GM23248 (cell line): ENCODE measurements at regions of chr17 and their contacts with region 1.

Region 1: GRCh38 chr17:5468075-5468473 is 708 bp downstream of the DHX33 start:
- DNase-seq: no peak
- H3K4me3 ChIP-seq: peak overlapping the region; percentile 99
- H3K27ac ChIP-seq: peak overlapping the region; percentile 55
- H3K4me1 ChIP-seq: peaks cover 12% of the 10 kb centered on the region
- H3K27me3 ChIP-seq: no peaks in the 10 kb centered on the region

Region 2: GRCh38 chr17:5413682-5414081 is 54.4 kb before region 1 on chr17:
- in situ Hi-C with region 1: no loop called
- DNase-seq: peak; percentile 95
- H3K4me3 ChIP-seq: peak overlapping the region; percentile 40
- H3K27ac ChIP-seq: peak overlapping the region; percentile 86
- H3K4me1 ChIP-seq: peaks cover 24% of the 10 kb centered on the region
- H3K27me3 ChIP-seq: no peaks in the 10 kb centered on the region

Region 3: DNA sequence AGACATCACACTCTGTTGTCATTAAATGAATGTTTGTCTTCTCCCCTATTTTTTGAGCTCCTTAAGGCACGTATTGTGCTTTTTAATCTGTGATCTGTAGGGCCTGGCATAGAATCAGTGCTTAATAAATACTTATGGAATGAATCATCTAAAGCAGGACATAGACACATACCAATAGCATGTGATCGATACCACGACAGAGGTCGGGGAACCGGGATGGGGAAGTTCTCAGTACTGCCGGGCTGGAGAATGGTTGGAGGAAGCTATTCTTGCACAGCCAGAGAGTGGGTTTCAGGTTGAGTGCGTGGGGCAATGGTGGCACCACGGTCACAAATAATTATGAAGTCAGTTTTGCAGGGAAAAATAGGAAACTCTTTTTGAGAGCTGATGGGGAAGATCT is 89.4 kb after region 1 on chr17:
- in situ Hi-C with region 1: loop called (anchors 25 kb)
- DNase-seq: peak; percentile 63
- H3K4me3 ChIP-seq: no peak overlapping the region
- H3K27ac ChIP-seq: peak overlapping the region; percentile 43
- H3K4me1 ChIP-seq: peaks cover 21% of the 10 kb centered on the region
- H3K27me3 ChIP-seq: no peaks in the 10 kb centered on the region

Region 4: DNA sequence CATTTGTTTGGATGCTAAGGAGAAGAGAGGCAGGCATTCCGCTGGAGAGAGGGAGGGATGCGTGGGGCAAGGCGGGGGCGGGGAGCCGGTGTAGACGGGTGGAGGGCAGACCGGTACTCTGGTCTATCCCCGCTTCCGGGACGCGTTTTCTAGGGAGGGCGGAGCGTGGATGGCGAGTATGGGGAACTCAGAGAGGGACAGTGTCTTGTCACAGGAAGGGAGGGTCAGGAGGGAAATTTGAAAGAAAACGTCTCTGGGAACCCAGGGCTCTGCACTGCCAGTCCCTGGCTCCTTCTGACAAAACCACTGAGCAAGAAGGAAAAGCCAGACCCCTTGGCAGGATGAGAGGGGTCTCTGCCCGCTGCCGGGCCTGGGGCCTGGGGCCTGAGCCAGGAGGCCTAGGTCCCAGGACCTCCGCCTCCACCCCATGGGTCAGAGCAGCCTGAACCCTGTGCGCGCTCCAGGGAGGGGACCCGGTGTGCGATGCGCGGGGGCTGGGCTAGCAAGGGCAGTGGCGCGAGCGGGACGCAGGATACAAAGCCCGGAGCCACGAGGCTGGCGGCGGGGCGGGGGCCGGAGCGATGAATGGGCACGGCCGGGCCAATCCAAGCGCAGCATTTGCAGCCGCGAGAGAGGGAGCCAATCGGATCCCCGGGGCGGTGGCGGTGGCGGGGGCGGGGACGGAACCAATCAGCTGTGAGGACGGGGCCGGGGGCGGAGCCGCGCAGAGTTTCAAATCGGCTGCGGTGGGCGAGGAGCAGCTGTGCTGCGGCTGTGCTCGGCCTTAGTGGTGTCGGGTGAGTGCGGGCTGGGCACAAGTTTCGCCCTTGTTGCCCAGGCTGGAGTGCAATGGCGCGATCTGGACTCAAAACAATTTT is 975.9 kb after region 1 on chr17 and contains the start of gene PIMREG:
- in situ Hi-C with region 1: loop called (anchors 25 kb)
- DNase-seq: peak; percentile 99
- H3K4me3 ChIP-seq: peak within 1 kb of the TSS; percentile 75
- H3K27ac ChIP-seq: peak within 1 kb of the TSS; percentile 77
- H3K4me1 ChIP-seq: peaks cover 12% of the 10 kb centered on the region
- H3K27me3 ChIP-seq: no peaks in the 10 kb centered on the region
- total RNA-seq, gene PIMREG: 20.7 and 28.7 TPM in 2 replicates